Right lobe of liver (tissue), 6 donors: ENCODE measurements at regions of chr1 and their contacts with region 1.

Region 1: GRCh38 chr1:205061665-205062069 is 18.7 kb downstream of the CNTN2 start:
- DNase-seq: peak in 2 of 3 donors; percentile 63 to 76
- ATAC-seq: peak; percentile 70 to 90 (median 87)
- H3K4me3 ChIP-seq: no peak overlapping the region
- H3K27ac ChIP-seq: no peak overlapping the region
- H3K4me1 ChIP-seq: no peaks in the 10 kb centered on the region
- H3K27me3 ChIP-seq: no peaks in the 10 kb centered on the region
- CTCF ChIP-seq: peak; percentile 86 to 94 (median 88)
- POLR2A ChIP-seq: no peak

Region 2: GRCh38 chr1:204685236-204686006 is 376.2 kb before region 1 on chr1 and contains the start of gene LRRN2:
- intact Hi-C with region 1: no loop called
- DNase-seq: peak in 1 of 3 donors; percentile 37
- ATAC-seq: peak; percentile 46 to 68 (median 56)
- H3K4me3 ChIP-seq: peak within 1 kb of the TSS; percentile 12 to 41 (median 23)
- H3K27ac ChIP-seq: no peak within 1 kb of the TSS
- H3K4me1 ChIP-seq: peaks cover 0 to 11% (median 0%) of the 10 kb centered on the region in 4 donors
- H3K27me3 ChIP-seq: no peaks in the 10 kb centered on the region
- CTCF ChIP-seq: no peak
- POLR2A ChIP-seq: no peak
- total RNA-seq, gene LRRN2: 0.07 to 0.78 (median 0.25) TPM

Region 3: GRCh38 chr1:204989266-204990058 is 72.2 kb before region 1 on chr1:
- intact Hi-C with region 1: loop called (anchors 5 kb)
- DNase-seq: peak; percentile 74 to 86 (median 85)
- ATAC-seq: peak; percentile 92 to 98 (median 94)
- H3K4me3 ChIP-seq: no peak overlapping the region
- H3K27ac ChIP-seq: no peak overlapping the region
- H3K4me1 ChIP-seq: peaks cover 0 to 27% (median 5%) of the 10 kb centered on the region in 4 donors
- H3K27me3 ChIP-seq: no peaks in the 10 kb centered on the region
- CTCF ChIP-seq: peak; percentile 95 to 99 (median 98)
- POLR2A ChIP-seq: no peak